ENCODE measurements at regions of chr15 and their contacts with region 1.

Region 1: GRCh38 chr15:78195735-78196201 is 38.6 kb downstream of the ACSBG1 start:
- DNase-seq: peak; percentile 10
- ATAC-seq: peak; percentile 91
- H3K4me3 ChIP-seq: no peak overlapping the region
- H3K27ac ChIP-seq: no peak overlapping the region
- H3K4me1 ChIP-seq: no peaks in the 10 kb centered on the region
- H3K27me3 ChIP-seq: peaks cover 0 to 6% of the 10 kb centered on the region in 2 experiments; a peak in 2 of 5 replicates
- CTCF ChIP-seq: peak; percentile 91
- EP300 ChIP-seq: no peak
- POLR2A ChIP-seq: no peak
- RAD21 ChIP-seq: peak; percentile 87

Region 2: DNA sequence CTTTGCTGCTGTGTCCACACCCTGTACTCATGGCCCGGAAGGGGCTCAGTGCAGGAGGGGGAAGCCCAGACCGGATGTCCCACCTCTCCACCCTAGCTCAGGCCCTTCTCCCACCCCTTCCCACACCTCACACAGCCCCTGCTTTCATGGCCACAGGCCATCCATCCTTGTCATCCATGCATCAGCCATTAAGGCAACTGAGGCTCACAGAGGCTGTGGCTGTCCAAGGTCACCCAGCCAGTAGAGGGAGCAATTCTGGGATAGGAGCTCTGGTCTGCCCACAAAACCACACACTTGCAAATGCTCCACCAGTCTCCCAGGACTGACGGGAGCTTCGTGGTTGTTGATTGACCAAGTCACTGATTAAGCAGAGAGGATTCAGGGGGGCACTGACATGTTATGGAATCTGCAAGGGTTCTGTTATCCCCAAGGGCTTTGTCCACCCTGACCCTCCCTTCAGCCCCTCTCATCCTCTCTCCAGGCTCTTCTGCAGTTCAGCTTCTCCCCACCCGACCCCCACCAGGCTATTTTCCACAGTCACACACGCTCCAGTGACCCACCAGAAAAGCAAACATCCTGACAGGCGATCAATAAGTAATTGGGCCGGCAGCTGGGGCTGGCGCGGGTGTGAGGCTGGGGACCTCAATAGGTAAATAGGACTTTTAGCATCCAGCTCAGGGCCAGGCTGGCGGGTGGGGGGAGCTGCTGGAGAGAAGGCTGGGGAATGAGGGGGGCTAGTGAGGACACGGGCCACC is 578.1 kb before region 1 on chr15:
- CTCF ChIA-PET with region 1: no interaction called
- POLR2A ChIA-PET with region 1: no interaction called
- in situ Hi-C with region 1: no loop called
- intact Hi-C with region 1: no loop called
- DNase-seq: peak; percentile 45
- ATAC-seq: peak; percentile 75
- H3K4me3 ChIP-seq: peak overlapping the region in 1 of 3 experiments; percentile 9; a peak in 1 of 6 replicates
- H3K27ac ChIP-seq: no peak overlapping the region
- H3K4me1 ChIP-seq: peaks cover 26% of the 10 kb centered on the region
- H3K27me3 ChIP-seq: peaks cover 0 to 5% of the 10 kb centered on the region in 2 experiments; a peak in 3 of 5 replicates
- CTCF ChIP-seq: peak; percentile 72
- EP300 ChIP-seq: no peak
- POLR2A ChIP-seq: no peak
- RAD21 ChIP-seq: no peak

Region 3: GRCh38 chr15:77959432-77959879 is 236.3 kb before region 1 on chr15:
- CTCF ChIA-PET with region 1: no interaction called
- POLR2A ChIA-PET with region 1: no interaction called
- in situ Hi-C with region 1: no loop called
- intact Hi-C with region 1: loop called (anchors 1 kb)
- DNase-seq: peak; percentile 48
- ATAC-seq: peak; percentile 98
- H3K4me3 ChIP-seq: no peak overlapping the region; a peak in 1 of 6 replicates
- H3K27ac ChIP-seq: no peak overlapping the region
- H3K4me1 ChIP-seq: peaks cover 18% of the 10 kb centered on the region
- H3K27me3 ChIP-seq: no peaks in the 10 kb centered on the region
- CTCF ChIP-seq: peak; percentile 96
- EP300 ChIP-seq: no peak
- POLR2A ChIP-seq: no peak
- RAD21 ChIP-seq: peak; percentile 89

Region 4: DNA sequence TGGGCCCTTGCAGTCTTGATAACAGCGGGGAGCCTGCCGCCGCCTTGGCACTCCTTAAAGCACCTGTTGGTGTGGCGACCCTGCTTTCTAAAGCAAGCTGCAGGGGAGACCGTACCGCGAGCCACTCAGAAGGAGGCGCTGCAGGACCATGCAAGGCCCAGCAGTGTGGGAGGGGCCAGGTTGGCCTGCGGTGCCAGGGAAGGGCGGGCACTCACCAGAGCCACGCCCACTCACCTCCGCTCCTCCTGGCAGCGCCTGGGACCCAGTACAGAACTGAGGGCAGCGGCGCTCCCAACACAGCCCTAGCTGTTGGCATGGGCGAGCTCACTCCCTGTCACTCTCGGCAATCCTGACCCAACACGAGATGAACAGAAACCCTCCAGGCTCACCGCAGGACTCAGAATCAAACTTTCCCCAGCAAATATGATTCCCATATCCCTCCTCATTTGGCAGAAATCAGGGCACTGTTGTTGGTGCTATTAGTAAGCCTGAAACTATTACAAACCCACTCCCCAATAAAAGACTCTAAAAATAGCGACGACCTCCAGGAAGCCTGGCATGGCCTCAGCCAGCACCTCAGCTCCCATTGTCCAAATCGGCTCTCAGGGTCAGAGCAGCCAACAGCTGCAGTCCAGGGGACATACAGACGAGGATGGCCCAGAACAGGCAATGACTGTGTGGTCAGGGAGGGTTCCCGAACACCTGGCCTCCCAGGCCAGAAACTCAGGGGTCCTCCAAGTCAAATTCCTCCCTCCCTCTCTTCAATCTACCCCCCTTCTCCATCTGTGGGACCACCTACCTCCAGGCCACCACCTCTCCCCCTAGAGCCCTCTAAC is 195.5 kb before region 1 on chr15:
- CTCF ChIA-PET with region 1: no interaction called
- POLR2A ChIA-PET with region 1: no interaction called
- in situ Hi-C with region 1: no loop called
- intact Hi-C with region 1: loop called (anchors 5 kb)
- DNase-seq: peak; percentile 62
- ATAC-seq: peak; percentile 92
- H3K4me3 ChIP-seq: no peak overlapping the region
- H3K27ac ChIP-seq: no peak overlapping the region
- H3K4me1 ChIP-seq: no peaks in the 10 kb centered on the region
- H3K27me3 ChIP-seq: no peaks in the 10 kb centered on the region
- CTCF ChIP-seq: peak; percentile 94
- EP300 ChIP-seq: no peak
- POLR2A ChIP-seq: no peak
- RAD21 ChIP-seq: peak; percentile 93

Region 5: GRCh38 chr15:78131295-78132061 is 64.3 kb before region 1 on chr15 and contains the start of gene CIB2:
- CTCF ChIA-PET with region 1: interaction called, 12 read pairs
- POLR2A ChIA-PET with region 1: no interaction called
- in situ Hi-C with region 1: no loop called
- intact Hi-C with region 1: no loop called
- DNase-seq: peak; percentile 43
- ATAC-seq: peak; percentile 81
- H3K4me3 ChIP-seq: peak within 1 kb of the TSS; percentile 75 to 87 (median 86)
- H3K27ac ChIP-seq: no peak within 1 kb of the TSS
- H3K4me1 ChIP-seq: peaks cover 39% of the 10 kb centered on the region
- H3K27me3 ChIP-seq: peaks cover 2 to 12% of the 10 kb centered on the region in 2 experiments; a peak in 2 of 5 replicates
- CTCF ChIP-seq: peak; percentile 75
- EP300 ChIP-seq: no peak
- POLR2A ChIP-seq: peak in 1 of 2 experiments; percentile 79; a peak in 2 of 4 replicates
- RAD21 ChIP-seq: peak; percentile 91
- total RNA-seq, gene CIB2: 1.5 and 1.8 TPM in 2 replicates

Region 6: GRCh38 chr15:78241007-78241406 is 45.2 kb after region 1 on chr15:
- CTCF ChIA-PET with region 1: interaction called, 13 read pairs
- POLR2A ChIA-PET with region 1: no interaction called
- in situ Hi-C with region 1: no loop called
- intact Hi-C with region 1: no loop called
- DNase-seq: peak; percentile 49
- ATAC-seq: peak; percentile 93
- H3K4me3 ChIP-seq: no peak overlapping the region
- H3K27ac ChIP-seq: no peak overlapping the region
- H3K4me1 ChIP-seq: peaks cover 32% of the 10 kb centered on the region
- H3K27me3 ChIP-seq: peaks cover 0 to 11% of the 10 kb centered on the region in 2 experiments; a peak in 1 of 5 replicates
- CTCF ChIP-seq: peak; percentile 92
- EP300 ChIP-seq: no peak
- POLR2A ChIP-seq: no peak
- RAD21 ChIP-seq: peak; percentile 77

Measured in HepG2 (cell line).